ENCODE measurements at regions of chr2 and their contacts with region 1.

Region 1: GRCh38 chr2:200713003-200713703 is 98.6 kb upstream of the BZW1 start:
- DNase-seq: peak; percentile 98
- ATAC-seq: peak; percentile 93
- H3K4me3 Mint-ChIP-seq: peak overlapping the region; percentile 70
- H3K27ac Mint-ChIP-seq: peak overlapping the region; percentile 100
- H3K4me1 Mint-ChIP-seq: peaks cover 47% of the 10 kb centered on the region
- H3K27me3 Mint-ChIP-seq: no peaks in the 10 kb centered on the region

Region 2: GRCh38 chr2:200373973-200374416 is 339.2 kb before region 1 on chr2:
- CTCF ChIA-PET with region 1: no interaction called
- POLR2A ChIA-PET with region 1: no interaction called
- intact Hi-C with region 1: loop called in 1 of 2 experiments (anchors 1 kb)
- DNase-seq: peak; percentile 57
- ATAC-seq: peak; percentile 92
- H3K4me3 Mint-ChIP-seq: peak overlapping the region; percentile 67
- H3K27ac Mint-ChIP-seq: peak overlapping the region; percentile 79
- H3K4me1 Mint-ChIP-seq: peaks cover 46% of the 10 kb centered on the region
- H3K27me3 Mint-ChIP-seq: no peaks in the 10 kb centered on the region

Region 3: GRCh38 chr2:200525882-200526651 is 187.1 kb before region 1 on chr2 and contains the start of gene SGO2:
- CTCF ChIA-PET with region 1: interaction called, 3 read pairs
- POLR2A ChIA-PET with region 1: no interaction called
- intact Hi-C with region 1: loop called (anchors 1 to 5 kb)
- DNase-seq: peak; percentile 98
- ATAC-seq: peak; percentile 99
- H3K4me3 Mint-ChIP-seq: peak within 1 kb of the TSS; percentile 97
- H3K27ac Mint-ChIP-seq: peak within 1 kb of the TSS; percentile 90
- H3K4me1 Mint-ChIP-seq: peaks cover 23% of the 10 kb centered on the region
- H3K27me3 Mint-ChIP-seq: no peaks in the 10 kb centered on the region
- total RNA-seq, gene SGO2: 49.9 to 56.7 TPM

Region 4: DNA sequence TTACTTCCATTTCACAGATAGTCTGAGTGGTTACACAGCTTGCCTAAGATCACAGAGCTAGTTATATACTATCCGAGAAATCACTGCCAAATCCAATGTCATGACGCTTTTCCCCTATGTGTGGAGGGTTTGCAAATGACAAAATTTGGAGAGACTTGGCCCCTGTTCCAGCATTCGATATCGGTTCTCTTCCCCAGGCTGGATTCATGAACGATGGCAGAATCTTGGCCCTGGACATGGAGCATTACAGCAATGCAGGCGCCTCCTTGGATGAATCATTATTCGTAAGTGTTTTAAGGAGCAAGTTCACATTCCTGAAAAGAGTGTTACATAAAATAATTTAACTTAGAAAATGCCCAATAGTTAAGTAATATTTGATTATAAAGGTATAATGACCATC is 72.3 kb before region 1 on chr2:
- CTCF ChIA-PET with region 1: no interaction called
- POLR2A ChIA-PET with region 1: no interaction called
- intact Hi-C with region 1: no loop called
- DNase-seq: no peak
- ATAC-seq: no peak
- H3K4me3 Mint-ChIP-seq: no peak overlapping the region
- H3K27ac Mint-ChIP-seq: no peak overlapping the region
- H3K4me1 Mint-ChIP-seq: no peaks in the 10 kb centered on the region
- H3K27me3 Mint-ChIP-seq: peaks cover 5% of the 10 kb centered on the region

Region 5: DNA sequence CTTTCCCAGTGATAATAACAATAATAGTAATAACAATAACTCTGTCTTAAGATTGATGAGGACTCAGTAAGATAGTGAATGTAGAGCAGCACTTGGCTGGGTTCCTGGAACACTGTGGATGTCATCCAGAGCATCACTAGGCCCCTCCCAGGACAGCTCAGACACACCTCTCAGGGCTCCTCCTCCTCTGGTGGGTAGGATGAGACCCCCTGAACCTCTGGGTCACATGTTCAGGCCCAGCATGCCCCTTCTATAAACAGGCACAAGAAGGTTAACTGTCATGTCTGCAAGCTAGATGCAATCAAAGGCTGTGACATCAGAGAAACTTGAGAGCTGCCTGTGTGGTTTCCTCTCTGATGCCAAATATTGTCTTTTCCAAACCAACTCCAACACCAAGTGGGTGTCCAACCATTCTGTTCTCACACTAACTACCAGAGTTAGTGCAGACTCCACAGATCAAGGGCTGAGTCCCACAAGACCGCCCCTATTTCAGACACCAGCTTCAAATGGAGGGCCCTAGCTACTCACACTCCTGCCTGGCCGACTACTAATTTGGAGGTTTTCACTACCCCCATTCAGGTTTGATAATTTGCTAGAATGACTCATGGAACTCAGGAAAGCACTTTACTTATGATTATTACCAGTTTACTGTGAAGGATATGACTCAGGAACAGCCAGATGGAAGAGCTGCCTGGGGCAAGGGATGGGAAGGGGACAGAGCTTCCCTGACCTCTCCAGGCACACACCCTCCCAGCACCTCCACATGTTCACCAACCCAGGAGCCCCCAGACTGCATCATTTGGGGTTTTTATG is 52.2 kb after region 1 on chr2:
- CTCF ChIA-PET with region 1: interaction called, 3 read pairs
- POLR2A ChIA-PET with region 1: interaction called, 4 read pairs
- intact Hi-C with region 1: loop called (anchors 1 kb)
- DNase-seq: peak; percentile 69
- ATAC-seq: peak; percentile 90
- H3K4me3 Mint-ChIP-seq: peak overlapping the region; percentile 7
- H3K27ac Mint-ChIP-seq: peak overlapping the region; percentile 82
- H3K4me1 Mint-ChIP-seq: peaks cover 30% of the 10 kb centered on the region
- H3K27me3 Mint-ChIP-seq: no peaks in the 10 kb centered on the region

Region 6: GRCh38 chr2:200963124-200963917 is 250.2 kb after region 1 on chr2 and contains the start of gene ORC2:
- CTCF ChIA-PET with region 1: interaction called, 4 read pairs
- POLR2A ChIA-PET with region 1: no interaction called
- intact Hi-C with region 1: loop called in 1 of 2 experiments (anchors 5 kb)
- DNase-seq: peak; percentile 95
- ATAC-seq: peak; percentile 95
- H3K4me3 Mint-ChIP-seq: peak within 1 kb of the TSS; percentile 92
- H3K27ac Mint-ChIP-seq: peak within 1 kb of the TSS; percentile 96
- H3K4me1 Mint-ChIP-seq: peaks cover 65% of the 10 kb centered on the region
- H3K27me3 Mint-ChIP-seq: no peaks in the 10 kb centered on the region
- total RNA-seq, gene ORC2: 68.5 to 80.5 TPM

Region 7: GRCh38 chr2:201118121-201118960 is 405.2 kb after region 1 on chr2:
- CTCF ChIA-PET with region 1: no interaction called
- POLR2A ChIA-PET with region 1: interaction called, 3 read pairs
- intact Hi-C with region 1: loop called in 1 of 2 experiments (anchors 2 kb)
- DNase-seq: peak; percentile 94
- ATAC-seq: peak; percentile 37
- H3K4me3 Mint-ChIP-seq: peak overlapping the region; percentile 98
- H3K27ac Mint-ChIP-seq: peak overlapping the region; percentile 100
- H3K4me1 Mint-ChIP-seq: peaks cover 42% of the 10 kb centered on the region
- H3K27me3 Mint-ChIP-seq: no peaks in the 10 kb centered on the region

Region 8: GRCh38 chr2:201151127-201151981 is 438.2 kb after region 1 on chr2:
- CTCF ChIA-PET with region 1: no interaction called
- POLR2A ChIA-PET with region 1: no interaction called
- intact Hi-C with region 1: no loop called
- DNase-seq: no peak
- ATAC-seq: peak; percentile 56
- H3K4me3 Mint-ChIP-seq: no peak overlapping the region
- H3K27ac Mint-ChIP-seq: peak overlapping the region; percentile 88
- H3K4me1 Mint-ChIP-seq: peaks cover 36% of the 10 kb centered on the region
- H3K27me3 Mint-ChIP-seq: no peaks in the 10 kb centered on the region

Region 9: DNA sequence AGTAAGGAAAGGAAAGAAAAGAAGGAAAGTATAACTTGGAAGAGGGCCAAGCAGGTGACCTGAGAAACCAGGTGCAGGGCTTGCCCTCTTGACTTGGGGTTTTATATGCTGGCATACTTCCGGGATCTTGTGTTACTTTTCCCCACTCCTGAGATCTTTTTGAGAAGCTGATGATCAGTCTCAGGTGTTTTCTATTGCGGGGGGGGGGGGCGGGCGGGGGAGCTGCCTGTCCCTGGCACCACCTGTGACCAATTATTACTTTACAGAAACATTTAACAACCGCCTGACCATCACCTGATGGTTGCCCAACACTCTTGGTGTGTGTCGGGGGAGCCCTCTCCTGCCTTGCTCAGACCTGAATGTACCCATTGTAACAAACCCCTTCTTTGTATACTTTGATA is 462.9 kb after region 1 on chr2:
- CTCF ChIA-PET with region 1: no interaction called
- POLR2A ChIA-PET with region 1: no interaction called
- intact Hi-C with region 1: loop called (anchors 1 to 5 kb)
- DNase-seq: no peak
- ATAC-seq: no peak
- H3K4me3 Mint-ChIP-seq: no peak overlapping the region
- H3K27ac Mint-ChIP-seq: no peak overlapping the region
- H3K4me1 Mint-ChIP-seq: peaks cover 10% of the 10 kb centered on the region
- H3K27me3 Mint-ChIP-seq: no peaks in the 10 kb centered on the region